Activated CD8-positive, alpha-beta memory T cell treated with anti-CD3 and anti-CD28 coated beads, Interleukin-2, amount 10 ng/mL, durations not matched to agents 7 days and 5 days (primary cell): ENCODE measurements at regions of chr20 and their contacts with region 1.

Region 1: GRCh38 chr20:63980806-63981728 is at the start of gene PRPF6:
- DNase-seq: peak; percentile 97
- ATAC-seq: peak; percentile 64
- H3K4me3 Mint-ChIP-seq: peak within 1 kb of the TSS; percentile 92
- H3K27ac Mint-ChIP-seq: peak within 1 kb of the TSS; percentile 99
- H3K4me1 Mint-ChIP-seq: peaks cover 59% of the 10 kb centered on the region
- H3K27me3 Mint-ChIP-seq: no peaks in the 10 kb centered on the region
- total RNA-seq, gene PRPF6: 77.5 to 80.6 TPM

Region 2: DNA sequence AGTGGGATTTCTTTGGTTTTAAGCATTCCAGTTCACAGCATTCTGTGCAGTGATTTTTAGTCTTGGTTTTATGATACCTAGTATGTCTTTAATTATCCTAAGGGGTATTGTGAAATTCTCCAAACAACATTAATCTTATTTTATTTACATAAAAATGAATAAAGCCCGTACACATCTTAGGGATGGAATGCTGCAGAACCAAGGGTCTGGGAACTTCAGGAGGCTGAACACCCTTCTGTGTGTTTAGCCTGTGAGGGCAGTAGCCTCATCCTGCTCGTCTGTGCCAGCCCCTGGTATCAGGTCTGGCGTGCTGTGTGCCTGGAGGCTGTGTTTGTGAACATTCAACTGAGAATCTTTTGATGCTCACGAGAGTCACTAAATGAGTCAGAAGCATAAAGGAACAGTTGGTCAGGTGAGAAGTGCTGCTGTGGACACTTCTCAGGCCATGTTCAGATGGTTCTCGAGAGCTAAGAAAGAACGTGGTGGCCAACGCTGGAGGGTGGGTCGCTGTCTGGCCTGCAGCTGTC is 29.7 kb after region 1 on chr20:
- CTCF ChIA-PET with region 1: interaction called, 12 read pairs
- DNase-seq: peak; percentile 53
- ATAC-seq: peak; percentile 67
- H3K4me3 Mint-ChIP-seq: no peak overlapping the region
- H3K27ac Mint-ChIP-seq: peak overlapping the region; percentile 72
- H3K4me1 Mint-ChIP-seq: peaks cover 60% of the 10 kb centered on the region
- H3K27me3 Mint-ChIP-seq: no peaks in the 10 kb centered on the region

Region 3: DNA sequence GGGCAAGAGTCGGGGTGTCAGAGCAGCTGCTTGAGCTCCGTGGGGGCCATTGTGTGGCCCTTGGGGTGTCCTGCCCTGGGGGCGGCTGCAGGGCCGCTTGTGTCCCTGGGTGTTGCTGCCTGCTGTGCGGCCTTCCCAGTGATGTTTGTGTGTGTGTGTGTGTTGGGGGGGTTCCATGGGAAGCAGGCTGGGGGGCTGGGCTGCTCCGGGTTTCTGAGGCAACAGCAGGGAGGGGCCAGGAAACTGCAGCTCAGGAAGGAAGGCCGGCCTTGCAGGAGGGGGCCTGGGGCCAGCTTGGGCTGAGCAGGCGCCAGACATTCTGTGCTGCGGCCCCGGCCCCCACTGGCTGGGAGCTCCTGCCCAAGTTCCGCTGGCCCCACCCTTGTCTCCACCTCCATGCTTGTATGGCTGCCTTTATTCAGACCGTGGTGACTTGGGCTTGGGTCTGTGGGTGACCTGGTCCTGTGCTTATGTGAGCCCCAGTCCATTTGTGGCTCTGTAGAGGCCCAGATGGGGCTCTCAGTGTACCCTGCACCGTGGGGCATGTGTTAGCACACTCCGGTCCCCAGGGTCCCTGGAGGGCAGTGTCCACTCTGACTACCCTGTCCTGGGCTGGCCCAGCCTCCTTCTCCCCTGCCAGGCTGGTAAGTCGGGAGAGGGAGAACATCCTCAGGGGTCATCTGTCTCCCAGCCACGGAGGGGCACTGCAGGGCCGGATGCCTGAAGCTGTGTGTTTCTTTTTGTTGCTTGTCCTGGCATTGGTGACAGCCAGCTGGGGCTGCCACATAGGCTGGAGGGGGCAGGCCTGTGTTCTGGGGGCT is 73.0 kb after region 1 on chr20:
- CTCF ChIA-PET with region 1: interaction called, 18 read pairs
- DNase-seq: no peak
- ATAC-seq: no peak
- H3K4me3 Mint-ChIP-seq: no peak overlapping the region
- H3K27ac Mint-ChIP-seq: no peak overlapping the region
- H3K4me1 Mint-ChIP-seq: peaks cover 30% of the 10 kb centered on the region
- H3K27me3 Mint-ChIP-seq: peaks cover 19% of the 10 kb centered on the region

Region 4: DNA sequence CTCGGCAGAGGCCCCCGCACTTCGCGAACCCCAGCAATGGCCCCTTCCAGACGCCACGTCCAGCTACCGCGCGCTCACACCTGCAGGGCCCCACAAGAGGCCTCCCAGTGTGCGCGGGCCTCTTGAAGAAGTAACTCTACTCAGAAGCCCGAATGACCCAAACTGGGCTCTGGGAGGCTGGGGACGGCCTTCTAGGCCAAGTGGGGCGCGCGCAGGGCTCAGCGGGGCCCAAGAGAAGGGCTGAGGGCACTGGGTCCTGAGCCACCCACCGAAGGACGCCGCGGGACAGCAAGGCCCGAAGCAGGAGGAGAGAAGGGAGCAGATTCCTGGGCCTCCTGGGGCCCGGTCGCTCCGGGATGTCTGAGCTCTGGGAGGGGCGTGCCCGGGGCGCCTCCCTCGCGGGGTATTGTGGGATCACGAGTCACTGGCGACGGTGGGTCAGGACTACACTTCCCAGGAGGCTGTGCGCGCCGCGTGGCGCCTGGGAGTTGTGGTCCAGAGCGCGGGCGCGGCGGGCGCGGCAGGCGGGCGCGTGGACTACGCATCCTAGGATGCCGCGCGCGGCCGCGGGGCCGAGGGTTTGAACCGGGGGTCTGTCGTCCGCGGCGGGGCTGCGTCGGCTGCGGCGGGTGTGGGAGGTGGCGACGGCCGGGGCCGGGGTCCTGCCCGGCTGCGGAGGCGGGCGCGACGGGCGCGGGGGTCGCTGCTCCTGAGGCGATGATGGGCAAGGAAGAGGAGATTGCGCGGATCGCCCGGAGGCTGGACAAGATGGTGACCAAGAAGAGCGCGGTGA is 81.7 kb after region 1 on chr20 and contains the start of gene TCEA2:
- CTCF ChIA-PET with region 1: interaction called, 18 read pairs
- DNase-seq: peak; percentile 97
- ATAC-seq: peak; percentile 83
- H3K4me3 Mint-ChIP-seq: peak within 1 kb of the TSS; percentile 85
- H3K27ac Mint-ChIP-seq: peak within 1 kb of the TSS; percentile 85
- H3K4me1 Mint-ChIP-seq: peaks cover 56% of the 10 kb centered on the region
- H3K27me3 Mint-ChIP-seq: no peaks in the 10 kb centered on the region
- total RNA-seq, gene TCEA2: 54.3 to 57.4 TPM

Region 5: GRCh38 chr20:64079273-64080012 is 98.4 kb after region 1 on chr20 and contains the start of gene RGS19:
- CTCF ChIA-PET with region 1: interaction called, 16 read pairs
- DNase-seq: peak; percentile 85
- ATAC-seq: peak; percentile 52
- H3K4me3 Mint-ChIP-seq: peak within 1 kb of the TSS; percentile 87
- H3K27ac Mint-ChIP-seq: peak within 1 kb of the TSS; percentile 88
- H3K4me1 Mint-ChIP-seq: peaks cover 40% of the 10 kb centered on the region
- H3K27me3 Mint-ChIP-seq: peaks cover 12% of the 10 kb centered on the region
- total RNA-seq, gene RGS19: 84.5 to 119 TPM

Region 6: GRCh38 chr20:64119681-64120341 is 138.7 kb after region 1 on chr20:
- CTCF ChIA-PET with region 1: interaction called, 10 read pairs
- DNase-seq: no peak
- ATAC-seq: peak; percentile 14
- H3K4me3 Mint-ChIP-seq: peak overlapping the region; percentile 5
- H3K27ac Mint-ChIP-seq: peak overlapping the region; percentile 42
- H3K4me1 Mint-ChIP-seq: peaks cover 10% of the 10 kb centered on the region
- H3K27me3 Mint-ChIP-seq: peaks cover 28% of the 10 kb centered on the region